AG04450 (cell line): ENCODE measurements at regions of chrX and their contacts with region 1.

Region 1: GRCh38 chrX:72276478-72276953 is 532 bp downstream of the RPS4X start:
- DNase-seq: no peak
- H3K4me3 ChIP-seq: peak overlapping the region; percentile 76
- H3K27ac ChIP-seq: peak overlapping the region; percentile 80
- H3K27me3 ChIP-seq: no peaks in the 10 kb centered on the region
- CTCF ChIP-seq: no peak

Region 2: GRCh38 chrX:72181178-72182125 is 95.1 kb before region 1 on chrX and contains the start of gene PIN4:
- CTCF ChIA-PET with region 1: no interaction called
- POLR2A ChIA-PET with region 1: interaction called, 10 read pairs
- DNase-seq: peak; percentile 91
- H3K4me3 ChIP-seq: peak within 1 kb of the TSS; percentile 84
- H3K27ac ChIP-seq: peak within 1 kb of the TSS; percentile 92
- H3K27me3 ChIP-seq: no peaks in the 10 kb centered on the region
- CTCF ChIP-seq: no peak
- polyA plus RNA-seq, gene PIN4: 13.1 and 16.9 TPM in 2 replicates

Region 3: GRCh38 chrX:72245461-72246089 is 30.9 kb before region 1 on chrX:
- CTCF ChIA-PET with region 1: interaction called, 35 read pairs
- POLR2A ChIA-PET with region 1: interaction called, 32 read pairs
- DNase-seq: no peak
- H3K4me3 ChIP-seq: no peak overlapping the region
- H3K27ac ChIP-seq: no peak overlapping the region
- H3K27me3 ChIP-seq: no peaks in the 10 kb centered on the region
- CTCF ChIP-seq: peak; percentile 72

Region 4: DNA sequence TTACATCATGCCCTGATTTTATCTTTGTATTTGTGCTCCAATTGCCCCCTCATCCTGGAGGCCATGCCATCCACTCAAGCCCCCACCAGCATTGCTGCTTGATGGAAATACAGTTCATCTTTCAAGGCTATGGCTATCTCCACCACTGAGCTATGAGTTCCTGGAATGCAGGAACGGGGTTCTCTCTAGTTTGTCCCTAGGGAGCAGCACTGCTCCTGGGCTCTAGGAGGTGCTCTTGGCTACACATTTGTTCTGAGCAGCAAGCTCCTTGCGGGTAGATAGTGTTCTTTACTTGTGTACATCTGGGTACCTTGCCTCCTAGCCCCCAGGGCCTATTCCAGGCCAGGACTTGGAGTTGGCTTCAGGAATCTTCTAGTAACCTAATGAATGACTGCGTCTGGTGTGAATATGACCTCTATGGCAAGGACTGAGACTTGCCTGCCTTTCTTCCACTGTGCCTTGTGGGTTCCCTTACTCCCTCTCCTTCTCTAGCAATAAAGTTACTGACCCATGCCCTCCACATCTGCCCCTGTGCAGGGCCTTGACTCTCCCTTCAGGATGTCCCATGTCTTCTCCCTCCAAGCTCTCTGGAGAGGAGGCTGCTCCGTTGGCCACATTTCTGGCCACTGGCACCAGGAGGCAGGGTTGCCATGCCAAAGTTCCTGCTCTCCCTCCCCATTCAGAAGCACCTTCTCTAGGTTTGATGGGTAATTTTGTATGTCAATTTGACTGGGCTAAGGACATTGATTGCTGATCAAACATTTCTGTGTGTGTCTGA is 21.6 kb after region 1 on chrX:
- CTCF ChIA-PET with region 1: interaction called, 13 read pairs
- POLR2A ChIA-PET with region 1: no interaction called
- DNase-seq: no peak
- H3K4me3 ChIP-seq: no peak overlapping the region
- H3K27ac ChIP-seq: no peak overlapping the region
- H3K27me3 ChIP-seq: peaks cover 34% of the 10 kb centered on the region
- CTCF ChIP-seq: peak; percentile 31

Region 5: DNA sequence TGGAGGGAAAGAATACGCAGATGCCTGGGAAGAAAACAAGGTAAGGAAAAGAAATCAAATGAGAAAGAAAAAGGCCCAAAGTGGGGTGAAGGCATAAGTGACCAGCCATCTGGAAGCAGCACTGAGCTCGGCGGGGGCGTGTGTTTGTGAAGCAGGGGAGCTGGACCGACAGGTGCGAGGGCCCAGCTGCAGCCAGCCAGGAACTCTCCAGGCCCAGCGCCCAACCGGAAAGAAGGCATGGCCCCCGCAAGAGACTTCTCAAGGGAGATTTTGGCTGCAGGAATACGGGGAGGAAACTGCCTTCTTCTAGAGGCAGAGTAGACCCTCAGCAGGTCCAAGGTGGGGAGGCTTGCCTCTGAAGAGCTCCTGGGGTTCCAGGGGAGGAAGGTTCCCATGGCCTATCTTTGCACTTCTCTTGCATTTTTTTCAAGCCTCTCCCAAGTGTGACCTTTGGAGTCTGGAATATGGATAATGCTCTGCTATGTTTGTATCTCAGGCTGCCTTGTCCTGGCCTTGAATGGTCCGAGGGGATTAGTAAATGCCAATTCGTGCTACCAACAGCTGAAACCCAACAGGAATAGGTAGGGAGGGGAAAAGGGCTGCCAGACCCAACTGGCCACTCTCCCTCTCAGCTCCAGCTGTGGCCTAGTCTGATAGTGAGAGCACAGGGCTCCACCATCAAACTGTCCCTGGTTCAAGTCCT is 40.0 kb after region 1 on chrX:
- CTCF ChIA-PET with region 1: interaction called, 12 read pairs
- POLR2A ChIA-PET with region 1: interaction called, 3 read pairs
- DNase-seq: no peak
- H3K4me3 ChIP-seq: no peak overlapping the region
- H3K27ac ChIP-seq: no peak overlapping the region
- H3K27me3 ChIP-seq: peaks cover 3% of the 10 kb centered on the region
- CTCF ChIP-seq: no peak

Region 6: GRCh38 chrX:72358313-72358712 is 81.8 kb after region 1 on chrX:
- CTCF ChIA-PET with region 1: no interaction called
- POLR2A ChIA-PET with region 1: no interaction called
- DNase-seq: no peak
- H3K4me3 ChIP-seq: no peak overlapping the region
- H3K27ac ChIP-seq: no peak overlapping the region
- H3K27me3 ChIP-seq: no peaks in the 10 kb centered on the region
- CTCF ChIP-seq: no peak

Region 7: DNA sequence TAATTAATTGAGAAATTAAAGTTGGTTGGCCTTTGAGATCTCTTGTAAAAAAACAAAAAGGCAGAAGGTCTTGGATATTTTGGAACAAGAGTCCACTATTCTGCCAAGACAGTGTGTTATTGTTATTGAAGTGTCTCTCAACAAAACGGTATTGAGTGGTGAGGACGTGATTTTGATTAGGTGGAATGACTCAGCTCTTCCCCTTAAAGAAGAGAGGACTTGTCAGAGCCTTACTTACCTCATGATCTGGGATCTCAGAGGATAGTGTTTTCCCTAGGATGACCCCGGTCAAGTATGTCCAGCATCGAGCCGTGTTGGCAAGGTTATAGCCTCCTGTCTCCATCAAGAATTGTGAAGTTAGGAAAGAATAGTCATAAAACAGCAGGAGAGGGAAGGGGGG is 185.2 kb after region 1 on chrX:
- CTCF ChIA-PET with region 1: no interaction called
- POLR2A ChIA-PET with region 1: no interaction called
- DNase-seq: no peak
- H3K4me3 ChIP-seq: no peak overlapping the region
- H3K27ac ChIP-seq: no peak overlapping the region
- H3K27me3 ChIP-seq: no peaks in the 10 kb centered on the region
- CTCF ChIP-seq: no peak